MCF 10A (cell line): ENCODE measurements at regions of chr3 and their contacts with region 1.

Region 1: DNA sequence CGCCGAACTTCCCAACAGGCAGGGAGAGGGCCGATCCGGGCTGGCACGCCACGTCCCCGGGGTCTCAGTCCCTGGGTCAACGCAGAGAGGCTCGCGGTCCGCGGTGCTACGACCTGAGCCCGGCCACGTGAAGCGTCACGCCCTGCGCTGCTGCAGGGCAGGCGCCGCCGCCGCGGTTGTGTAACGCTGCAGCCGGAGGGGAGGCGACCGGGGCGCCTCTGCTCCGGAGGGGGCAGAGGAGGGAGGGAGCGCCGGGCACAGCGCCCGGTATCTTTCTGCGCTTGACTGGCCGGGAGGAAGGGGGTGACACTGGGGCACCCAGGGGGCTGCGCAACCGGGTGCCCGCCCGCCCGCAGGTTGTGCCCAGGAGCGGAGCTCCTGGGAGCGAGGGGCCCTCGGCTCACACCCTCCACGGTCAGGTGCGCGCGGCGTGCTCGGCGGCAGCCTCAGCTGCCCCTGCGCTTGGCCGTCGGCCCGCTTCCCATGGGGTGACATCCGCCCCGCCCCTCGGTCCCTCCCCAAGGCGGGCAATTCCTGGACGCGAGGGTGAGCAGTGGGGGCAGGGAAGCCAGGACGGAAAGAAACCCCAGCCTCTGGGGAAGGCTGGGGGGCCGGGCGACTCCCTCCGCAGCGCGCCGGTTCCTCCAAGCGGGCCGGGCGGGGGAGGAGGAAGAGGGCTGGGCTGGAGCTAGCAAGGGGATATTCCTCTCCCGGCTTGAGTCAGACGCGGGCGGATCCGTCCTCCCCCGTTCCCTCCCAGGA is 852 bp upstream of the BHLHE40 start:
- DNase-seq: peak; percentile 99
- H3K4me3 Mint-ChIP-seq: peak overlapping the region; percentile 94
- H3K27ac Mint-ChIP-seq: peak overlapping the region; percentile 93
- H3K4me1 Mint-ChIP-seq: peaks cover 26% of the 10 kb centered on the region
- H3K27me3 Mint-ChIP-seq: no peaks in the 10 kb centered on the region
- CTCF ChIP-seq: no peak

Region 2: DNA sequence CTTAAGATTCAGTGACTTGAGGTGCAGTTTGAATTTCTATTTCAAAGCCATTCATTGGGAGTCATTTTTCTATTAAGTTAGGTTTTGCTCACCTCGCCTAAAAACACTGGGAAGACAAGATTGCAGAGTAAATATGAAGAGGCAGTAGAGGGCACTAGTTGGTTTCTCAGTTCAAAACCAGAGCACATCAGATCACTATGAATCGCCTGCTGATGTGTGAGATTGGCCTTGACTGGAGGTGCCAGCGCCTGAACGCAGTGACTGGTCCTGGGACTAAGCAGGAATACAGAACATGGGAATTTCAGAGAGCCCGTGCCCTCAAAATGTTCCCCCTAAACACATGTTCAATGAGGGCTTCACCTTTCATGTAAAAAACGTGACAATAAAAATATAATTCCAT is 256.3 kb before region 1 on chr3:
- CTCF ChIA-PET with region 1: interaction called, 37 read pairs
- POLR2A ChIA-PET with region 1: interaction called, 10 read pairs
- intact Hi-C with region 1: loop called (anchors 1 kb)
- DNase-seq: peak; percentile 87
- H3K4me3 Mint-ChIP-seq: no peak overlapping the region
- H3K27ac Mint-ChIP-seq: no peak overlapping the region
- H3K4me1 Mint-ChIP-seq: peaks cover 18% of the 10 kb centered on the region
- H3K27me3 Mint-ChIP-seq: no peaks in the 10 kb centered on the region
- CTCF ChIP-seq: peak; percentile 59

Region 3: DNA sequence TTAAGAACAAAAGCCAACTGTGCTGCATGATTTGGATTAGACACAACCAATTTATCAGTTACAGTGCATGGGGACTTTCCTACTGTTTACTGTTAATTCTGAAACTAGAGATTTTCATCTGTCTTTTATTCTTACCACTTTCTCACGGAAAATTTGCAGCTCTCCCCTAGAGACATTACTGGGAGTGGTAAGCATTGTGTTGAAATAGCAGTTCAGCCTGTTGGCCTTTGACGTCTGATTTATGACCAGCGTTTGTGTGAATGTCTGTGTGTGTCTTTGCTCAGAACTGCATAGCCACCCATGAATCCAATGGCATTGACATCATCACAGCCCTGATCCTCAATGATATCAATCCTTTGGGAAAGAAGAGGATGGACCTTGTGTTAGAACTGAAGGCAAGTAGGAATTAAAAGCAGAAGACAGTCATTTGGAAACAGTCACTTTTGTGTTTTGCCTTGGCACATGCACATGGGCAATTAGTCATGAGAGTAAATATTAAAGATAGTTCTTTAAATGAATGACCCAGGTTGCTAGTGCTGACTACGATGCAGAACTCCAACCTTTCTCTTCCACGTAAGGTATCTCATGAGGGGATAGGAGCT is 201.3 kb before region 1 on chr3:
- CTCF ChIA-PET with region 1: interaction called, 3 read pairs
- POLR2A ChIA-PET with region 1: interaction called, 15 read pairs
- intact Hi-C with region 1: no loop called
- DNase-seq: peak; percentile 79
- H3K4me3 Mint-ChIP-seq: no peak overlapping the region
- H3K27ac Mint-ChIP-seq: peak overlapping the region; percentile 80
- H3K4me1 Mint-ChIP-seq: peaks cover 11% of the 10 kb centered on the region
- H3K27me3 Mint-ChIP-seq: no peaks in the 10 kb centered on the region
- CTCF ChIP-seq: no peak

Region 4: DNA sequence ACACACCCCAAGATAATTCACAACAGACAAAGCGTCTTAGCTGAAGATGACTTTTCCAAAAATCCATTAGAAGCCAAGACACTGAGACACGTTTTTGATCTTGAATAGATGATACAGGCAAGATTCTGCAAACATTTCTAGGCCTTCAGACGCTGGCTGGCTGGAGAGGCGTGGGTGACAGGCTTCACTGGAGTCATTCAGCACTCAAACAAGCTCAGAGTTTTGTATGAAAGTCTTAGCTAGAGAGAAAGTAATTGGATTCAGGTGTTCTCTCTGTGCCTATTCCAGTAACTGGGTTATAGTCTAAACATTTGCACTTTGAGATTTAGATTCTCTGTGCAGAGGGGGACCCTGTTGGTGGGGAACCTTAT is 146.8 kb before region 1 on chr3:
- CTCF ChIA-PET with region 1: no interaction called
- POLR2A ChIA-PET with region 1: interaction called, 19 read pairs
- intact Hi-C with region 1: loop called (anchors 2 kb)
- DNase-seq: no peak
- H3K4me3 Mint-ChIP-seq: no peak overlapping the region
- H3K27ac Mint-ChIP-seq: peak overlapping the region; percentile 43
- H3K4me1 Mint-ChIP-seq: peaks cover 28% of the 10 kb centered on the region
- H3K27me3 Mint-ChIP-seq: no peaks in the 10 kb centered on the region
- CTCF ChIP-seq: no peak

Region 5: DNA sequence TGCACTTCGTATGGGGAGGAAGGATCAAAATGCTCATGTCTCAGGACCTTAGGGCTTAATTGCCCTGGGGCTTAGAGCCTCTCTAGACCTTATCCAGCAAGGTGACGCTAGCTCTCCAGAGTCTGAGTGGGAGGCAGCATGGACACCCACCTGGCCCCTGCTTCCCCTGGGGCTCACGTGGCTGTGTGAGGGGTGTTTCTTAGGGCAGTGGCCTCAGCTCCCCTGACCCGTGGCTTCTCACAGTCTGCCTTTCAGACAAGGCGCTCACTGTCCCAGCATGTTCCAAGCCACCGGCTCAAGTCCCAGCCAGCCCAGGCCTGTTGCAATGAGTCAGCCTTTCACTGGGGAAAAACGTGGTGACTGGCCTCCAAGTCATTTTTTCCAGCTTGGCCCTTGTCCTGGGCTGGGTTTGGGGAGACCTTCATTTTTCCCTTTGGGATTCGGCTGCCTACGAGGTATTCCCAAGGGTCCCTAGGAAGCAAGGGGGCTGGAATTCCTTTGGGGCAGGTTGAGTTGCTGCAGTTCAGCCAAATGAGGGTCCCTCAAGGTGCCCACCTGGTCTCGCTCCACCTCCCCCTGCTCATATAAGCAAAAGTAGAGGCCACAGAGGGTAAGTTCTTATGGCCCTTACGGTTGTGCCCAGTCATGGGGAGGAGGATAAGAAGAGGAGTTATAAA is 16.6 kb after region 1 on chr3:
- CTCF ChIA-PET with region 1: interaction called, 57 read pairs
- POLR2A ChIA-PET with region 1: interaction called, 137 read pairs
- intact Hi-C with region 1: no loop called
- DNase-seq: peak; percentile 98
- H3K4me3 Mint-ChIP-seq: no peak overlapping the region
- H3K27ac Mint-ChIP-seq: peak overlapping the region; percentile 89
- H3K4me1 Mint-ChIP-seq: peaks cover 23% of the 10 kb centered on the region
- H3K27me3 Mint-ChIP-seq: no peaks in the 10 kb centered on the region
- CTCF ChIP-seq: no peak

Region 6: DNA sequence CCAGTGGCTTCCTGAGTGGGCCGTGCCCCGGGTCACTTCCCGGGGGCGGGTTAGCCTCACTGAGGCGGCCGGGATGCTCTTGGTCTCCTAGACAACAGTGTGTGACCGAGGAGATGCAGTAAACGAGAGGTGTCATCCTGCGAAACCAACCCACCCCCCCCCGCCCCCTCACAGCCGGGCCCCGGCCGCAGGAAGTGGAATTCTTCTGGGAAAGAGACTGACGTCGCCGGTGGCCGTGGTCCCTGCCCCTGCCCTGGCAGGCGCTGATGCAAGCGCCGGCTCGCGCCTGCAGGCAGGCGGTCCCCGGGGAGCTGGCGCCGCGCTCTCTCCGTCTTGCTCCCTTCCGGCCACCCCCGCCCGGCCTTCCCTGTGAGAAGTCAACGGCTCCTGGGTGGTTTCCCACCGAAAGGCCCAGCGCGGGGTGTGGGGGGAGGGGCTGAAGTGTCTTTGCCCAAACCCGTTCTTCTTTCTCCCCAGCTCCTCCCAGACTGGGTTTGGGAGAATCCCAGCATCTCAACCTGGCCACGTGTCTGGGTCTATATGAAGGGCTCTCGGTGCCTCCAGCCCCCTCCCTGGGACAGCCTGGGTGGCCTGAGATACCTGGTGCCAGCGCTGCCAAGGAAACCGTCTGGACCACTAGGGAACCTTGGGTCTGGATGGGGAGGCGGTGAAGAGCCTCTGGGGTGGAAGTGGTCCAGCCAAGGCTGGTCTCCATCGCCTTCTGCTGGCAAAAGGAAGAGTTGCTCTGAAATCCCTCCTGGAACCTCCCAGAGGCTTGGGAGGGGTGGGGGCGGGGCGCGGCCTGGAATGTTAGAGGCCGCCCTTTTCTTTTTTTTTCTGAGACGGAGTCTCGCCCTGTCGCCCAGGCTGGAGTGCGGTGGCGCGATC is 48.2 kb after region 1 on chr3:
- CTCF ChIA-PET with region 1: interaction called, 185 read pairs
- POLR2A ChIA-PET with region 1: interaction called, 251 read pairs
- intact Hi-C with region 1: loop called (anchors 1 kb)
- DNase-seq: peak; percentile 96
- H3K4me3 Mint-ChIP-seq: peak overlapping the region; percentile 74
- H3K27ac Mint-ChIP-seq: peak overlapping the region; percentile 84
- H3K4me1 Mint-ChIP-seq: peaks cover 23% of the 10 kb centered on the region
- H3K27me3 Mint-ChIP-seq: no peaks in the 10 kb centered on the region
- CTCF ChIP-seq: peak; percentile 71

Region 7: DNA sequence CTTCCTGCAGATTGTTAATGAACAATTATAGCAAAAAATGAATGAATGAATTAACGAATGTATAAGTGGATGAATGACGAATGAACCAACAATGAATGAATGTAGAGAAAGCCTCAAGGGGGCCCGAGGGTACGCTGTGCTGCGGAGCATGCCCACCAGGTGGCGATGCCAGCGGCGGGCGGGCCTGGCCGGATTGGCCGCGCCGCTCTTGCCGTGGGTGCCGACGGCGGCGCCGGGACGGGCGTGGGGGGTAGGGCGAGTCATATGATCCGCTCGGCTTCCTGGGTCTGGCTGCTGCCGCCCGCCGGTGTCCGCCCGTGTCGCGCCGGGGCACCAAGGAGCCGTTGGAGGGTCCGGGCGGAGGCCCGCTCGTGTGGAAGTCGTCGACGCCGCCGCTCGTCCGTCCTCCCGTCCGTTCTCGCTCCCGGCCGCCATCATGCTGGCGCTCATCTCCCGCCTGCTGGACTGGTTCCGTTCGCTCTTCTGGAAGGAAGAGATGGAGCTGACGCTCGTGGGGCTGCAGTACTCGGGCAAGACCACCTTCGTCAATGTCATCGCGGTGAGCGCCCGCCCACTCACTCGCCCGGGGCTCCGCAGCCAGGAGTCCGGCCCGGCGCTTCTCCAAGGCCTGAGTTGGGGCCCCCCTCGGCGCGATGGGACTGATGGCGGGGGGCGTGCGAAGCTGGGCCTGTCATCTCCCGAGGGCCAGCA is 143.8 kb after region 1 on chr3 and contains the start of gene ARL8B:
- CTCF ChIA-PET with region 1: interaction called, 8 read pairs
- POLR2A ChIA-PET with region 1: interaction called, 8 read pairs
- intact Hi-C with region 1: loop called (anchors 5 kb)
- DNase-seq: peak; percentile 84
- H3K4me3 Mint-ChIP-seq: peak within 1 kb of the TSS; percentile 75
- H3K27ac Mint-ChIP-seq: peak within 1 kb of the TSS; percentile 82
- H3K4me1 Mint-ChIP-seq: peaks cover 12% of the 10 kb centered on the region
- H3K27me3 Mint-ChIP-seq: no peaks in the 10 kb centered on the region
- CTCF ChIP-seq: peak; percentile 92
- total RNA-seq, gene ARL8B: 53.6 and 74.3 TPM in 2 replicates